ENCODE measurements at regions of chr6 and their contacts with region 1.

Region 1: GRCh38 chr6:153312641-153313040 is 181.6 kb upstream of the RGS17 start:
- DNase-seq: peak; percentile 54
- H3K27ac ChIP-seq: no peak overlapping the region
- CTCF ChIP-seq: peak; percentile 54

Region 2: DNA sequence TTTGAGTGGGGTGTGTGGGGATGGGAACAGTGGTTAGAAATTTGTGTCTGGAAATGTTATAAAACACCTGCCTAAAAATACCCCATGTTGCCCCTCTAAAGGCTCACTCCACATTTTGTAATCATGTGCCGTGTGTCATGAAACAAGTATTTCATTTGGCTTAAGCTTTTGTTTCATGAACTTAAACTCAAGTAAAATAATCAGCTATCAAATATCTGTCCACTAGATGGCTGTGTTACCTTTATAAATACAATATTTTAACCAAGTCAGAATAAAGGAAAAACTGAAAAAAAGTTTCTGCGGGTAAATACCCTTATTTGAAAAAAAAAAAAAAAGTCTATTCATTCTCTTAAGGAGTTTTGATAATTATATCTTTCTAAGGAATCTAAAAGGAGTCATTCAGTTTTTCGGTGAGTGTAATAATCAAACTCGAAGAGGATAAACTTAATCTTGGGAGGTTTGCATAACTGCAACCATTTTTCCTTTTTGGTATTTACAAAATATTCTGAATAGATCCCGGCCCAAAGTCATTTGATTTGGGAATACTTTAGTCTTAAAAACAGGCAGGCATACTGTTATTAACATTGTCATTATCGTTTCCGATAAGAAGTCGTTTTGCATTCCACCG is 280.3 kb before region 1 on chr6:
- CTCF ChIA-PET with region 1: interaction called, 16 read pairs
- POLR2A ChIA-PET with region 1: no interaction called
- DNase-seq: peak; percentile 20
- H3K27ac ChIP-seq: no peak overlapping the region
- CTCF ChIP-seq: peak; percentile 63

Region 3: DNA sequence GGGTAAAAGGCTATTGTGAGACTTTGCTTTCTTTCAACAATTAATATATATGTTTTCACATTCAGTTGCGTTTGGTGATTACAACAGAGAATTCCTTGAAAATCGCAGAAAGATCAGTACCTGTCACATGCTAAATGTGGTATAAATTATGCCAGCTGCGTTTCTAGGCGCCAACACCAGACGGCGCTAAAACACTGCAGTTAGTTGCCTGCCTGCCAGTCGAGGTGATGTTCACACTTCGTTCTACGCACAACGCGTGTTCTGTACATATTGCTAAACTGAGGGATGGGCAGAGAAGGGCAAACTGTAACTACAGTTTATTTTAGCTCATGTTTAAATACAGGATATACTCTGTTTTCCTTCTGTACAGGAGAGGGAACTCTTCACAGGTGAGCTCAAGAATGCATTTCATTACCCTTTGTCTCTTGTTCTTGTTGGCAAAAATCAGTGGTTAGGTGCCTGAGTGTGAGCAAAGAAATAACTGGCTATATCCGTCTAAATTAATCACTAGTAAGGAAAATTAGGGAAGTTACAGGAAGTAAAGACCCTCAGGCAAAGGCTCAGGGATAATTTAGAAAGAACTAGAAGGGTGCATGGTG is 81.5 kb before region 1 on chr6:
- CTCF ChIA-PET with region 1: interaction called, 12 read pairs
- POLR2A ChIA-PET with region 1: no interaction called
- DNase-seq: peak; percentile 46
- H3K27ac ChIP-seq: no peak overlapping the region
- CTCF ChIP-seq: peak; percentile 97

Region 4: DNA sequence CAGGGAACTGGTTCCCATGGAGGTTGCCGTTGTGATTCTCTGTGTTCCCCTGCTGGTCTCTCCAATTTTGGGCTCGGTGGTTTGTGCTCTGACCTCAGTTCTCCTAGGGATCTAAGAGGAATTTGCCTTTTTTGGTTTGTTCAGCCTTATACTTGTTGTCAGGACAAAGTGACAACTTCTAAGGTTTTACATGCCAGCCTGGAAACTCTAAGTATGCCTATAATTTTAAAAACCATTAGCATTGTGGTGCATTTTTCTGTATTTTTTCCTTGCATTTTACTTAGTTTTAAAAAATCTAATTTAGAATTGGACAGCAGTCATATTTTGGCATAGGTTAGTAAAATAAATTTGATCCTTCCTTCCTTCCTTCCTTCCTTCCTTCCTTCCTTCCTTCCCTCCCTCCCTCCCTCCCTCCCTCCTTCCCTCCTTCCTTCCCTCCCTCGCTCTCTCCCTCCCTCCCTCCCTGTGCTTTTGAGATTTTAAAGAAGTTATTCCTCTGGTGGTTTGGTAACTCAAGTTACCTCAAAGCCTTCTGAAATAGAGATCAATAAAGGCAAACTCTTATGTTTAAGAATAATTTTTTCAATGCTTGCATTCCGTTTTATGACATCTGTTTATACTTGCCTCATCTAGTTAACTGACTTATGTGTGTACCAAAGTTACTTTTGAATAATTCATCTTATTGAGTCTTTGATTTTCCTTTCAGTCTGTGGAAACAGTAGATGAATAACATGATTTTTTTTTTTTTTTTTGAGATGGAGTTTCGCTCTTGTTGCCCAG is 40.2 kb before region 1 on chr6:
- CTCF ChIA-PET with region 1: no interaction called
- POLR2A ChIA-PET with region 1: no interaction called
- DNase-seq: no peak
- H3K27ac ChIP-seq: no peak overlapping the region
- CTCF ChIP-seq: no peak

Region 5: DNA sequence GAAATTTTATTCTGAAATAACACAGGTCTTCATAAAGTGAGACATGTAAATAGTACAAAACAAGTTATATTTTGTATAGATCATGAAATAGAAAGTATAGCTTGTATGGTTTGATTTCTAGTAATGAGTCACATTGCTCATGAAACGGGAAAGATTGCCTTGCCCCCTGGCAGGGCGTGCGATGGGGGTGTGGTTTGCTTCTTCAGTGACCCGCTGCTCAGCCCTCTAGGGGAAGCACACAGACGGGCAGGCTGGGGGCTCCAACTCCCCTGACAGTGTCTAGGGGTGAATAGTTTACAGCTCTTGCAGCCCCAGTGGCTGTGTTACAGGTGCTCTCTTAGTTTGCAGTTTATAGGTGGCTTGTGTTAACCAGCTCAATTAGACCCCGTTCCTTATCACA is 11.0 kb before region 1 on chr6:
- CTCF ChIA-PET with region 1: no interaction called
- POLR2A ChIA-PET with region 1: no interaction called
- DNase-seq: no peak
- H3K27ac ChIP-seq: no peak overlapping the region
- CTCF ChIP-seq: no peak

Region 6: DNA sequence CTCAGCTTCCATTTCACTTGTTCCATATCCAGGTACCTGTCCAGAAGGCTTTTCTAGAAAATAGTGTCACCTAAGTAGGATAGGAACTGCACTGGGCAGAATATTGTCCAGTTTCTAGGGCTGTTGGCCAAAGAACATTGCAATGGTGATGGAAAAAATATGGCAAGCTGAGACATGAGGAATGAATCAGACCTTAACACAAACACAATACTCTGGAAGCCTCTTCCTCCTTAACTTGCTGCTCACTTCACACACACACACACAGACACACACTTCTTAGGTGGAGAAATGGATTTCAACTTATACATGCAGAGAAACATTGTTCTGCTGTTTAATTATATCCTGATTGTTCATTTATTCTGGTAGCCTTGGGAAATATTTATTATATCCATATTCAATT is 21.5 kb after region 1 on chr6:
- CTCF ChIA-PET with region 1: no interaction called
- POLR2A ChIA-PET with region 1: no interaction called
- DNase-seq: peak; percentile 4
- H3K27ac ChIP-seq: no peak overlapping the region
- CTCF ChIP-seq: no peak

Region 7: GRCh38 chr6:153424719-153425400 is 112.2 kb after region 1 on chr6:
- CTCF ChIA-PET with region 1: no interaction called
- POLR2A ChIA-PET with region 1: no interaction called
- DNase-seq: no peak
- H3K27ac ChIP-seq: no peak overlapping the region
- CTCF ChIP-seq: no peak